CD8-positive, alpha-beta T cell (primary cell): ENCODE measurements at regions of chr7 and their contacts with region 1.

Region 1: GRCh38 chr7:43582503-43583423 is at the start of gene STK17A:
- DNase-seq: peak; percentile 90 to 98 (median 94)
- ATAC-seq: peak; percentile 76
- H3K4me3 ChIP-seq: peak within 1 kb of the TSS; percentile 87 to 93
- H3K4me3 Mint-ChIP-seq: peak within 1 kb of the TSS; percentile 99
- H3K27ac ChIP-seq: peak within 1 kb of the TSS; percentile 81 to 97
- H3K27ac Mint-ChIP-seq: peak within 1 kb of the TSS; percentile 99
- H3K4me1 ChIP-seq: peaks cover 11% of the 10 kb centered on the region
- H3K4me1 Mint-ChIP-seq: peaks cover 16% of the 10 kb centered on the region
- H3K27me3 ChIP-seq: no peaks in the 10 kb centered on the region
- H3K27me3 Mint-ChIP-seq: no peaks in the 10 kb centered on the region
- CTCF ChIP-seq: peak; percentile 98
- total RNA-seq, gene STK17A: 301 to 311 TPM

Region 2: DNA sequence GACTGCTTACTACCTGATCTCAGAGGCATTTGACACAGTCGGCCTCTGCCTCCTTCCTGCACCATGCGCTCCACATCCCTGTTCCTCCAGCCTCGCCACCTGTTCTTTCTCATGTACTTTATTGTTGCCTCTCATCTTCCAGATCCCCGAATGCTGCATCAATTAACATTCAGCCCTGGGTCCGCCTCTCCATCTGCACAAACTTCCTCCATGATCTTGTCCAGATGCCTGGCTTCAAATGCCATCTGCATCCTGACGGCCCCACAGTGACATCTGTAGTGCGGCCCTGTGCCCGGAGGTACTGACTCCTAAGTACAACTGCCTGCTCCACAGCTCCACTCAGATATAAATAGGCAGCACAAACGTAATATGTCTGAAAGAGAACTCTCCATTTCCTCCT is 51.1 kb before region 1 on chr7:
- CTCF ChIA-PET with region 1: no interaction called
- POLR2A ChIA-PET with region 1: no interaction called
- intact Hi-C with region 1: no loop called
- DNase-seq: no peak
- ATAC-seq: no peak
- H3K4me3 ChIP-seq: no peak overlapping the region
- H3K4me3 Mint-ChIP-seq: no peak overlapping the region
- H3K27ac ChIP-seq: no peak overlapping the region
- H3K27ac Mint-ChIP-seq: no peak overlapping the region
- H3K4me1 ChIP-seq: no peaks in the 10 kb centered on the region
- H3K4me1 Mint-ChIP-seq: no peaks in the 10 kb centered on the region
- H3K27me3 ChIP-seq: no peaks in the 10 kb centered on the region
- H3K27me3 Mint-ChIP-seq: peaks cover 7% of the 10 kb centered on the region
- CTCF ChIP-seq: no peak

Region 3: GRCh38 chr7:43562383-43562782 is 20.4 kb before region 1 on chr7:
- CTCF ChIA-PET with region 1: interaction called, 13 read pairs
- POLR2A ChIA-PET with region 1: no interaction called
- intact Hi-C with region 1: no loop called
- DNase-seq: no peak
- ATAC-seq: no peak
- H3K4me3 ChIP-seq: no peak overlapping the region
- H3K4me3 Mint-ChIP-seq: no peak overlapping the region
- H3K27ac ChIP-seq: no peak overlapping the region
- H3K27ac Mint-ChIP-seq: no peak overlapping the region
- H3K4me1 ChIP-seq: no peaks in the 10 kb centered on the region
- H3K4me1 Mint-ChIP-seq: no peaks in the 10 kb centered on the region
- H3K27me3 ChIP-seq: no peaks in the 10 kb centered on the region
- H3K27me3 Mint-ChIP-seq: peaks cover 18% of the 10 kb centered on the region
- CTCF ChIP-seq: no peak

Region 4: DNA sequence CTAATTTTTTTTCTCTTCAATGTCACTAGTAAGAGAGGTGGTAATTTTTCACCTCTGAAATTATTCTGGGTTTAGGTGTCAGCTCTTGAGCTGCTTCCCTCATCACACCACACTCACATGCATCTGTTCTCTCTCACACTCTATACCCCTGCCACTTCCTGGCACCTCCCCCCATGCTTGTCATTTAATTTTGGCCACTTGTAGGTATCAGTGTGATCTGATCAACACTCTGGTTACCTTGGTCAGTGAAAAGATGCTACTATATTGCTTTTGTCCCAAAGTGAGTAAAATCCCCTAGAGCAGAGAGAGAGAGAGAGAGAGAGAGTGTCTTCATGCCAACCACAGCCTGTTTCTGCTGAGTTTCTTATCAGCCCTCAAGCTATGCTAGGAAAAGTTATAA is 42.7 kb after region 1 on chr7:
- CTCF ChIA-PET with region 1: interaction called, 59 read pairs
- POLR2A ChIA-PET with region 1: interaction called, 11 read pairs
- intact Hi-C with region 1: loop called in 1 of 2 experiments (anchors 2 kb)
- DNase-seq: peak; percentile 25 to 94 (median 61)
- ATAC-seq: peak; percentile 74
- H3K4me3 ChIP-seq: no peak overlapping the region
- H3K4me3 Mint-ChIP-seq: peak overlapping the region; percentile 71
- H3K27ac ChIP-seq: peak overlapping the region; percentile 23 to 75
- H3K27ac Mint-ChIP-seq: peak overlapping the region; percentile 94
- H3K4me1 ChIP-seq: peaks cover 94% of the 10 kb centered on the region
- H3K4me1 Mint-ChIP-seq: peaks cover 94% of the 10 kb centered on the region
- H3K27me3 ChIP-seq: no peaks in the 10 kb centered on the region
- H3K27me3 Mint-ChIP-seq: no peaks in the 10 kb centered on the region
- CTCF ChIP-seq: no peak

Region 5: GRCh38 chr7:43674584-43675436 is 92.0 kb after region 1 on chr7:
- CTCF ChIA-PET with region 1: interaction called, 20 read pairs
- POLR2A ChIA-PET with region 1: interaction called, 5 read pairs
- intact Hi-C with region 1: no loop called
- DNase-seq: no peak
- ATAC-seq: no peak
- H3K4me3 ChIP-seq: no peak overlapping the region
- H3K4me3 Mint-ChIP-seq: no peak overlapping the region
- H3K27ac ChIP-seq: no peak overlapping the region
- H3K27ac Mint-ChIP-seq: no peak overlapping the region
- H3K4me1 ChIP-seq: peaks cover 38% of the 10 kb centered on the region
- H3K4me1 Mint-ChIP-seq: peaks cover 84% of the 10 kb centered on the region
- H3K27me3 ChIP-seq: no peaks in the 10 kb centered on the region
- H3K27me3 Mint-ChIP-seq: no peaks in the 10 kb centered on the region
- CTCF ChIP-seq: no peak

Region 6: GRCh38 chr7:43721193-43721806 is 138.5 kb after region 1 on chr7:
- CTCF ChIA-PET with region 1: interaction called, 99 read pairs
- POLR2A ChIA-PET with region 1: interaction called, 11 read pairs
- intact Hi-C with region 1: loop called (anchors 1 kb)
- DNase-seq: peak in 3 of 9 experiments; percentile 22 to 76 (median 69)
- ATAC-seq: peak; percentile 31
- H3K4me3 ChIP-seq: no peak overlapping the region
- H3K4me3 Mint-ChIP-seq: no peak overlapping the region
- H3K27ac ChIP-seq: no peak overlapping the region
- H3K27ac Mint-ChIP-seq: no peak overlapping the region
- H3K4me1 ChIP-seq: no peaks in the 10 kb centered on the region
- H3K4me1 Mint-ChIP-seq: peaks cover 54% of the 10 kb centered on the region
- H3K27me3 ChIP-seq: no peaks in the 10 kb centered on the region
- H3K27me3 Mint-ChIP-seq: no peaks in the 10 kb centered on the region
- CTCF ChIP-seq: peak; percentile 95

Region 7: DNA sequence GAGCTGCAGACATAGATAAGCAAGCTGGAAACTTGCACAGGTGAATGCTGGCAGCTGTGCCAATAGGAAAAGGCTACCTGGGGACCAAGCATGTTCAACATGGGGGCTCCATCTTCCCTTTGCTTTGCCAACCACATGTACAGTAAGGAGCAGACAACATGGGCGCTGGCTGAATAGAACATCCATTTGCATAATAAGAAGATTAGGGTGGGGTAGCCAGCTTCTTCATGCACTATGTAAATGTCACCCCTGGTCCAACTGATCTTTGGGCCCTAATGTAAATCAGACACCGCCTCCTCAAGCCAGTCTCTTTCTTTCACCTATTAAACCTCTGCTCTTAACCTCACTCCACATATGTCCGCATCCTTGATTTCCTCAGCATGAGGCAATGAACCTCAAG is 260.5 kb after region 1 on chr7:
- CTCF ChIA-PET with region 1: interaction called, 71 read pairs
- POLR2A ChIA-PET with region 1: interaction called, 5 read pairs
- intact Hi-C with region 1: loop called (anchors 1 kb)
- DNase-seq: no peak
- ATAC-seq: no peak
- H3K4me3 ChIP-seq: no peak overlapping the region
- H3K4me3 Mint-ChIP-seq: no peak overlapping the region
- H3K27ac ChIP-seq: no peak overlapping the region
- H3K27ac Mint-ChIP-seq: no peak overlapping the region
- H3K4me1 ChIP-seq: peaks cover 4% of the 10 kb centered on the region
- H3K4me1 Mint-ChIP-seq: peaks cover 6% of the 10 kb centered on the region
- H3K27me3 ChIP-seq: no peaks in the 10 kb centered on the region
- H3K27me3 Mint-ChIP-seq: peaks cover 4% of the 10 kb centered on the region
- CTCF ChIP-seq: no peak

Region 8: DNA sequence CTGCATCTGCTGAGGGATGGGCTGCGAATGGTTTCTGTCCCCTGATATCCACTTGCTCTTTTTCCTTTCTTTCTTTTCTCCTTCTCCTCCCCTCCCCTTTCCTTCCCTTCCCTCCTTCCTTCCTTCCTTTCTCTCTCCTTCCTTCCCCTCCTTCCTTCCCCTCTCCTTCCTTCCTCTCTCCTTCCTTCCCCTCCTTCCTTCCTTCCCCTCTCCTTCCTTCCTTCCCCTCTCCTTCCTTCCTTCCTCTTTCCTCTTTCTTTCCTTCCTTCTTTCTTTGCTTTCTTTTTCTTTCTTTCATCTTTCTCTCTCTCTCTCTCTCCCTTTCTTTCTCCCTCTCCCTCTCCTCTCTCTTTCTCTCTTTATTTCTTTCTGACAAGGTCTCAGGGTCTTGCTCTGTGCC is 394.8 kb after region 1 on chr7:
- CTCF ChIA-PET with region 1: no interaction called
- POLR2A ChIA-PET with region 1: no interaction called
- intact Hi-C with region 1: no loop called
- DNase-seq: no peak
- ATAC-seq: no peak
- H3K4me3 ChIP-seq: no peak overlapping the region
- H3K4me3 Mint-ChIP-seq: no peak overlapping the region
- H3K27ac ChIP-seq: no peak overlapping the region
- H3K27ac Mint-ChIP-seq: no peak overlapping the region
- H3K4me1 ChIP-seq: no peaks in the 10 kb centered on the region
- H3K4me1 Mint-ChIP-seq: no peaks in the 10 kb centered on the region
- H3K27me3 ChIP-seq: no peaks in the 10 kb centered on the region
- H3K27me3 Mint-ChIP-seq: no peaks in the 10 kb centered on the region
- CTCF ChIP-seq: no peak